Head of caudate nucleus (tissue), 42 donors: ENCODE measurements at regions of chr7 and their contacts with region 1.

Region 1: GRCh38 chr7:19203686-19204085 is 58.5 kb upstream of the FERD3L start:
- DNase-seq: no peak

Region 2: DNA sequence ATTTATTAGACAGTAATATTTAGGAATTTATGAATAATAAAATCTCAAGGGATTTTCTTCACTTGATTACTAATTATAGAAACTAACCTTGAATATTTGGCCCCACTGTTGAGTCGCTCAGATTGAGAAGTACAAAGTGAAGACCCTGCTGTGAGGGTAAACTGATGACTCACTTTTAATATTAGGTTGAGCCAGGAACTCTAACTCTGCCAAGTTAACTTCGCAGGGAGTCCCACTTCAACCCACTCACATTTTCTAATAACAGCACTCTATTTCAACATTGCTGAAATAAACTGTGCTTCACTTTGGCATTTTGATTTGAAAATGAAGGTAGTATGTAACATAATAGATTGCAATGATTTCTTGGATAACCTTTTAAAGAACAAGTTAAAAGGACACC is 304.4 kb after region 1 on chr7:
- intact Hi-C with region 1: no loop called
- DNase-seq: peak in 3 of 42 donors; percentile 6 to 8 (median 6)

Region 3: GRCh38 chr7:19552576-19552975 is 348.9 kb after region 1 on chr7:
- intact Hi-C with region 1: loop called (anchors 5 kb)
- DNase-seq: no peak